ENCODE measurements at regions of chrX and their contacts with region 1.

Region 1: GRCh38 chrX:154515878-154516655 is at the start of gene FAM3A:
- DNase-seq: peak; percentile 83 to 96 (median 91)
- ATAC-seq: peak; percentile 94
- H3K4me3 ChIP-seq: peak within 1 kb of the TSS; percentile 64 to 68
- H3K4me3 Mint-ChIP-seq: peak within 1 kb of the TSS; percentile 81
- H3K27ac ChIP-seq: peak within 1 kb of the TSS; percentile 70 to 76
- H3K27ac Mint-ChIP-seq: peak within 1 kb of the TSS; percentile 92
- H3K4me1 ChIP-seq: peaks cover 39% of the 10 kb centered on the region
- H3K4me1 Mint-ChIP-seq: peaks cover 27% of the 10 kb centered on the region
- H3K27me3 ChIP-seq: no peaks in the 10 kb centered on the region
- H3K27me3 Mint-ChIP-seq: no peaks in the 10 kb centered on the region
- CTCF ChIP-seq: no peak
- total RNA-seq, gene FAM3A: 37.7 to 41.7 TPM

Region 2: DNA sequence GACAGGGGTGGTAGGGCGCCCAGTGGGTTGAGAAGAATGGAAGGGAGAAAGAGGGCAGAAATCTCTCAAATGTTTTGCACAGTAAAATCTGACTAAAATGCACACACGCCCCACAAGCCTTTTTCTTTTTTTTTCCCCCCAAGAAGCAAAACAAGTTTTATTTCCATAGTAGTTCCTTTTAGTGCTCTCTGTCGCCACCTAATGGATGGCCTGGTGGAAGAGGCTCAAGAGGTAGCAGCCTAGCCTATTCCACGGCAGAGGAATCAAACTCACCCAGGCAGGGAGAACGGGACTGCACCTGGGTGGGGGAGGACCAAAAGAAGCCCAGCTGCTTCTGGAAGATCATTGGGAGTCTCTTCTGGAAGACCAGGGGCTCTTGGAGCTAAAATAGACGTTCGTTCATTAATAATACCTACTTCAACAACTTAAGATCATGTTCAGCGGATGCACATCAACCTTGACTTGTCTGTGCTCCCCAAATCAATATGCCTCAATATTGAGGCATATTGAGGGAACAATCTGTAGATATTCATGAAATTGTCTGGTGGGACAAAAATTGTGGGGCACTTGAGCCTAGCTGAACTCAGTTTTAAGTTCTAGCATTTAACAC is 464.8 kb before region 1 on chrX:
- CTCF ChIA-PET with region 1: no interaction called
- POLR2A ChIA-PET with region 1: no interaction called
- intact Hi-C with region 1: no loop called
- DNase-seq: peak; percentile 43 to 80 (median 70)
- ATAC-seq: peak; percentile 85
- H3K4me3 ChIP-seq: no peak overlapping the region
- H3K4me3 Mint-ChIP-seq: no peak overlapping the region
- H3K27ac ChIP-seq: peak overlapping the region in 1 of 2 experiments; percentile 25
- H3K27ac Mint-ChIP-seq: peak overlapping the region; percentile 62
- H3K4me1 ChIP-seq: peaks cover 18% of the 10 kb centered on the region
- H3K4me1 Mint-ChIP-seq: peaks cover 41% of the 10 kb centered on the region
- H3K27me3 ChIP-seq: no peaks in the 10 kb centered on the region
- H3K27me3 Mint-ChIP-seq: no peaks in the 10 kb centered on the region
- CTCF ChIP-seq: peak; percentile 55

Region 3: DNA sequence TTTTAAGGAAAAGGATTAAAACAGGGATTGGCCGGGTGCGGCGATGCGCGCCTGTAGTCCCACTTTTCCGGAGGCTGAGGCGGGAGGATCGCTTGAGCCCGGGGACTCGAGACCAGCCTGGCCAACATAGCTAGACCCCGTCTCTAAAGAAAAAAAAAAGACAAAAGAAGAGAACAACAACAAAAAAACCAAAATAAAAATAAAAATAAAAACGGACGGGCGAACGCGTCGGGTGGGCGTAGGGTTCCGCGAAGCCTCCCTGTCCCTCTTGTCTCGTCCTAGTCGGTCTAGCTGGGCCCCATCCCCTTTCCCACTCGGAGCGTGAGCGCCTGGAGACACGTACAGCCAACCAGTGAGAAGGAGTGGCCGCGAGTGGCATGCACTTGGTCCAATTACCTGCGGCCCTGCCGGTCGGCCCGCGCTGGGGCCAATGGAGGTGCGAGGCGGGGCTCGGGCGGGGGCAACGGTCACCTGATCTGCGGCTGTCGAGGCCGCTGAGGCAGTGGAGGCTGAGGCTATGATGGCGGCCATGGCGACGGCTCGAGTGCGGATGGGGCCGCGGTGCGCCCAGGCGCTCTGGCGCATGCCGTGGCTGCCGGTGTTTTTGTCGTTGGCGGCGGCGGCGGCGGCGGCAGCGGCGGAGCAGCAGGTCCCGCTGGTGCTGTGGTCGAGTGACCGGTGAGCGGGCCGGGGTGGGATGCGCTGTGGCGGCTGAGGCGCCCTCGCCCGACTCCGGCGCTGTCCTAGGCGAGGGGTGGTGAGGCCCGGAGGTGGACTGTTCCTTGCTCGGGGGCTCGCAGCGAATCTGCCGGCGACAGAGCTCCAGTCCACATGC is 87.7 kb before region 1 on chrX and contains the start of gene ATP6AP1:
- CTCF ChIA-PET with region 1: no interaction called
- POLR2A ChIA-PET with region 1: interaction called, 3 read pairs
- intact Hi-C with region 1: loop called in 1 of 2 experiments (anchors 5 kb)
- DNase-seq: peak; percentile 71 to 94 (median 86)
- ATAC-seq: peak; percentile 97
- H3K4me3 ChIP-seq: peak within 1 kb of the TSS; percentile 63 to 67
- H3K4me3 Mint-ChIP-seq: peak within 1 kb of the TSS; percentile 82
- H3K27ac ChIP-seq: peak within 1 kb of the TSS; percentile 45 to 63
- H3K27ac Mint-ChIP-seq: peak within 1 kb of the TSS; percentile 86
- H3K4me1 ChIP-seq: peaks cover 12% of the 10 kb centered on the region
- H3K4me1 Mint-ChIP-seq: peaks cover 27% of the 10 kb centered on the region
- H3K27me3 ChIP-seq: no peaks in the 10 kb centered on the region
- H3K27me3 Mint-ChIP-seq: no peaks in the 10 kb centered on the region
- CTCF ChIP-seq: no peak
- total RNA-seq, gene ATP6AP1: 31.2 to 32.4 TPM

Region 4: DNA sequence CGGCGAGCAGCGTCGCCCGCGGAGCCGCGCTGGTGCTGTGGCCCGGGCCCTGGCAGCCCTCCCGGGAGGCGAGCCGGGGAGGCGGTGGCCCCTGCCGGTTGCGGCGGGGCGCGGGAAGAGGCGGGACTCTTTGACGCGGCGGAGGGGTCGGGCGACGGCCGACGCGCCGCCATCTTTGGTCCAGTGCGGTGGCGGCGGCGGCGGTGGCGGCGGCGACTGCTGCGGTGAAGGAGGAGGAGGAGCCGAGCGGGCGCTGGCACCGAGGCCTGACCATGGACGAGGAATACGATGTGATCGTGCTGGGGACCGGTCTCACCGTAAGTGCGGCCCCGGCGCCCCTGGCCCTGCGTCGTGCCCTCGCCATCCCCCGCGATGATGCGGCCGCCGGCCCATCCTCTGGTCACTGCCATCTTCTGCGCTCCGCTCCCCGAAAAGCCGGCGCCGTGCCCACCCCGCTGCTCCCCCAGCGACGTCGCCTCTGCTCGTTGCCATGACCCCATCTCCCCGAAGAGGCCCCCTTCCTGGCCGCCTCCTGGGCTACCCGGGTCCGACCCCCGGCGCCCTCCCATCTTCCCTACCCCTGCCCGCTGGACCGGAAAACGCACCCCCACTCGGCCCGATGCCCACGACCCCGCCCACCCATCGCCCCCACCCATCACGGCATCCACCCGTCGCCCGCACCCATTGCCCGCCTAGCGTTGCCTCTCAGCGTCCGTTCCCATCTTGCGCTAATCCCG is 78.9 kb before region 1 on chrX and contains the start of gene GDI1:
- CTCF ChIA-PET with region 1: no interaction called
- POLR2A ChIA-PET with region 1: no interaction called
- intact Hi-C with region 1: loop called in 1 of 2 experiments (anchors 5 kb)
- DNase-seq: peak in 7 of 9 experiments; percentile 24 to 73 (median 55)
- ATAC-seq: peak; percentile 56
- H3K4me3 ChIP-seq: peak within 1 kb of the TSS; percentile 41 to 58
- H3K4me3 Mint-ChIP-seq: peak within 1 kb of the TSS; percentile 79
- H3K27ac ChIP-seq: peak within 1 kb of the TSS; percentile 30 to 68
- H3K27ac Mint-ChIP-seq: peak within 1 kb of the TSS; percentile 92
- H3K4me1 ChIP-seq: peaks cover 10% of the 10 kb centered on the region
- H3K4me1 Mint-ChIP-seq: peaks cover 28% of the 10 kb centered on the region
- H3K27me3 ChIP-seq: no peaks in the 10 kb centered on the region
- H3K27me3 Mint-ChIP-seq: no peaks in the 10 kb centered on the region
- CTCF ChIP-seq: no peak
- total RNA-seq, gene GDI1: 113 to 119 TPM

Region 5: DNA sequence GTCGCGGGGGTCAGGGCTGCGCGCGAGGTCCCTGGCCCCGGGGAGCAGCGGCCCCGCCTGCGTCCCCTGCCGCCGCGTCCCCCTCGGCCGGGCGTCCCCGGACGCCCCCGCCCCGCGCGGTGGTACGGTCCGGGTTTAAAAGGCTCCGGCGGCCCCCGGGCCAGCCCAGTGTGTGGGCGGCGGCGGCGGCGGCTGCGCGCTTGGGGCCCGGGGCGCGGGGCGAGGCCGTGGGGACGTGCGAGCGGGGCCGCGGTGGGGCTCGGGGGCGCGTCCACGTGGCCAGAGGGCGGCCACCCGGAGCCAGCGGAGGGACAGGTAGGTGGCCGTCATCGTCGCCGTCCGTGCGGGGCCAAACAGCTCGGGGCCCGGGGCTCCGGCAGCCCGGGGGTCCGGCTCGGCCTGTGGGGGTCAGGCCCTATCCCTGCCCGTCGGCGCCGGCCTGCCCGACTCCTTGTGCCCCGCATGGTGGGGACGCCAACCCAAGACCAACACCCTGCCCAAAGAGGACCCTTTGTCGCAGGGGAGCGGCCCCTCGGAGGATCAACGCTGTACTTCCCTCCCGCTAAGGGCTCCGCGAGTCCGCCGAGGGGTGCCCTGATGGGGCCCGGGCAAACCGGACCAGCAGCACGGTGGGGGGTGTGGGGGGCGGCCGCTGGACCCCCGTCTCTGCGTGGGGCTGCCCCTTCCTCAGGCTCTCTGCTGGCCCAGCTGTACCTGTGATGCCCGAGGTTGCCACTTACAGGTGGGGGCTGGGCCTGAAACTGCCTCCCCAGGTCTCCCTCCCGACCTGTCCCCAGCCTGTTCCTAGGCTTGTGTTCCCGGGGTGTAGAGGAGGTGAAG is 57.7 kb before region 1 on chrX and contains the start of gene PLXNA3:
- CTCF ChIA-PET with region 1: no interaction called
- POLR2A ChIA-PET with region 1: interaction called, 5 read pairs
- intact Hi-C with region 1: loop called in 1 of 2 experiments (anchors 1 kb)
- DNase-seq: peak; percentile 44 to 86 (median 64)
- ATAC-seq: peak; percentile 77
- H3K4me3 ChIP-seq: peak within 1 kb of the TSS; percentile 43 to 63
- H3K4me3 Mint-ChIP-seq: peak within 1 kb of the TSS; percentile 96
- H3K27ac ChIP-seq: peak within 1 kb of the TSS in 1 of 2 experiments; percentile 33
- H3K27ac Mint-ChIP-seq: peak within 1 kb of the TSS; percentile 94
- H3K4me1 ChIP-seq: peaks cover 5% of the 10 kb centered on the region
- H3K4me1 Mint-ChIP-seq: peaks cover 9% of the 10 kb centered on the region
- H3K27me3 ChIP-seq: no peaks in the 10 kb centered on the region
- H3K27me3 Mint-ChIP-seq: no peaks in the 10 kb centered on the region
- CTCF ChIP-seq: no peak
- total RNA-seq, gene PLXNA3: 46.7 to 52.1 TPM

Measured in CD8-positive, alpha-beta T cell (primary cell).